GM12878 (cell line): ENCODE measurements at regions of chr1 and their contacts with region 1.

Region 1: DNA sequence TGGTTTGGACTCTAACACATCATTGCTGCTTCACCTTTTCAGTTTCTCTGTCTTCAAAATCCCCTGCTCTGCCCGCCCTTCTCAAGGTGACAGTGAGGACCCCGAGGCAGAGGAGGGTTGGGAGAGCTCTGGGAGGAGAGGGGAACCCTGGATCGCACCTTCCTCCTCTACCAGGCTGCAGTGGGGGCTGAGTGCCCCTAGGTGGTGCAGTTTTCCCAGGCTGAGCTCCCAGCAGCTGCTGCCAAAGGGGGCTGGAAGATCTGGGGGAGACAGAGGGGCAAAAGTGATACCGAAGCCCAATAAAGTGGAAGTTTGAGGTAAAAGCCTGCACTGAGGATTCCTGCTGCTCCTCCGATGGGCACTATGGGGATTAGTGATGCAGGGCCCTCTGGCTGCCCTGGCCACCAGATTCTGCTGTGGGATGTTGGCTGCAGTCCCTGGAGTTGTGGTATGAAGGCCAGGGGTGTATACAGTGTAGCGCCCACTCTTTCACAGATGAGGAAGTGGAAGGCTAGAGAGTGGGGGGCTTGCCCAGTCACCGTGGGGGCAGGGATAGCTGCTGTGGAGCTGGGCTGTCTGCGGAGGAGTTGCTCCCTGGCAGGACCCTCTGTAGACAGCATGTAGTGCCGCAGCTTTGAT is 40.7 kb upstream of the SCMH1 start:
- DNase-seq: no peak
- ATAC-seq: peak; percentile 88
- H3K4me3 ChIP-seq: no peak overlapping the region
- H3K27ac ChIP-seq: no peak overlapping the region
- H3K4me1 ChIP-seq: no peaks in the 10 kb centered on the region
- H3K27me3 ChIP-seq: peaks cover 2 to 4% of the 10 kb centered on the region in 2 experiments; a peak in 1 of 4 replicates
- CTCF ChIP-seq: peak; percentile 79 to 94 (median 88)
- EP300 ChIP-seq: no peak
- POLR2A ChIP-seq: no peak
- RAD21 ChIP-seq: peak; percentile 72

Region 2: DNA sequence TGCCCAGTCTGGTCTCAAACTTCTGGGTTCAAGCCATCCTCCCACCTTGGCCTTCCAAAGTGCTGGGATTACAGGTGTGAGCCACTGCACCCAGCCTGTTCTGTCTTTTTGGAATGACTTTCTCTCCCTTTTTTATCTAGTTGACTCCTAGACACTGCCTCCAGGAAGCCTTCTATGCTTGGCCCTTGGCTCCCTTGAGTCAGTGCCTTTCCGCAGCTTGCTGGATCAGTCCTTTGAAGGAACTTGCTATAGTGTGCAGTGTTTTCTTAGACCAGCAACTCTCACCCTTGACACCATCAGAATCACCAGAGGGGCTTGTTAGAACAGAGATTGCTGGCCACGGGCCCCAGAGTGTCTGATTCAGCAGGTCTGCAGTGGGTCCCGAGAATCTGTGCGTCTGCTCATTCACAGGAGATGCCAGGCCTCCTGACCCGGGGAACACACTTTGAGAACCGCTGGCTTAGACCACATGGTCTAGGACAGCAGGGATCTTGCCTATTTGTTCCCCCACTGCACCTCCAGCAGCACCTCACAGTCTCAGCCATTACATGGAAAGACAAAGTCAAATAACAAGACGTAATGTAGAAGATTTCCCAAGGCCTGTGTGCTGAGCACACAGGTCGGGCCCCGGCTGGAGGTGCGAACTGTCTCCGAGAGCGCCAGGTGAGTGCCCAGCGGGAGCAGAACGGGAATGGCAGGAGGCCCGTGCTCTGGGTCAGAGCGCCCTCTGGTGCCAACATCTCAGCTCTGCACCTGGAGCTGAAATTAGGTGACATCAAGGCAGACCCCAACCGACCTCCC is 330.7 kb before region 1 on chr1:
- CTCF ChIA-PET with region 1: no interaction called
- POLR2A ChIA-PET with region 1: no interaction called
- RAD21 ChIA-PET with region 1: no interaction called
- SMC1A ChIA-PET with region 1: no interaction called
- in situ Hi-C with region 1: no loop called
- intact Hi-C with region 1: no loop called
- DNase-seq: no peak
- ATAC-seq: peak; percentile 88
- H3K4me3 ChIP-seq: no peak overlapping the region
- H3K27ac ChIP-seq: no peak overlapping the region
- H3K4me1 ChIP-seq: no peaks in the 10 kb centered on the region
- H3K27me3 ChIP-seq: no peaks in the 10 kb centered on the region
- CTCF ChIP-seq: peak; percentile 91 to 94 (median 92)
- EP300 ChIP-seq: no peak
- POLR2A ChIP-seq: no peak
- RAD21 ChIP-seq: peak; percentile 87

Region 3: DNA sequence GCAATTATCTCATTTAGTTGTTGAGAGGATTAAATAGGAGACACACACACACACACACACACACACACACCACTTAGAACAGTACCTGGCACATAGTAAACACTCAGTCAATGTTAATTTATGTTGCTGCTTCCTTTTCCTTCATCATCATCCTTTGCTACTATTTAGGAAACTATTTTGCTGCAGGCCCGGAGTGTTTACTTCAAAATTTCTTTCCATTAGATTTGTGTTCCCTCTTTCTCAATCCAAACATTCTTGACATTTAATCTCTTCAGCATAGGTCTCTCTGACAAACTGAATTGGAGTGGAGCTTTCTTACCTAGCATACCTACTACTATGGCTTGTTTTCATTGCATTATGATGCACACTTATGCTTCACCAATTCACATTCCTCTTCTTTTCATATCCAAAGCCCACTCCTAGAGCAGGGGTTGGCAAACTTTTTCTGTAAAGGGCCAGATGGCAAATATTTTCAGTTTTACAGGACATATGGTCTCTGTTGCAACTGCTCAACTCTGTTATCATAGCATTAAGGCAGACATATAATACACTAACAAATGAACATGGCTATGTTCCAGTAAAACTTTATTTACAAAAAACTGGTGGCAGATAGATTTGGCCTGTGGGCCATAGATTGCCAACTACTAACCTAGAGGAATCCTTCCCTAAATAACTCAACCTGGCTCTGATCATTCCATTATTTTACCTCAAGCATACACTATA is 90.2 kb before region 1 on chr1:
- CTCF ChIA-PET with region 1: no interaction called
- POLR2A ChIA-PET with region 1: no interaction called
- RAD21 ChIA-PET with region 1: no interaction called
- SMC1A ChIA-PET with region 1: no interaction called
- in situ Hi-C with region 1: no loop called
- intact Hi-C with region 1: no loop called
- DNase-seq: no peak
- ATAC-seq: no peak
- H3K4me3 ChIP-seq: no peak overlapping the region
- H3K27ac ChIP-seq: no peak overlapping the region
- H3K4me1 ChIP-seq: no peaks in the 10 kb centered on the region
- H3K27me3 ChIP-seq: no peaks in the 10 kb centered on the region
- CTCF ChIP-seq: no peak
- EP300 ChIP-seq: no peak
- POLR2A ChIP-seq: no peak
- RAD21 ChIP-seq: no peak

Region 4: GRCh38 chr1:41222496-41222895 is 60.3 kb before region 1 on chr1:
- CTCF ChIA-PET with region 1: no interaction called
- POLR2A ChIA-PET with region 1: no interaction called
- RAD21 ChIA-PET with region 1: no interaction called
- SMC1A ChIA-PET with region 1: no interaction called
- in situ Hi-C with region 1: no loop called
- intact Hi-C with region 1: no loop called
- DNase-seq: no peak
- ATAC-seq: peak; percentile 96
- H3K4me3 ChIP-seq: 0 out of 2 replicates have a peak overlapping the region, but pooled peaks have one; percentile 27
- H3K27ac ChIP-seq: peak overlapping the region; percentile 27; the same call in 1 of the 2 replicates
- H3K4me1 ChIP-seq: peaks cover 10% of the 10 kb centered on the region; the same call in 1 of the 2 replicates
- H3K27me3 ChIP-seq: no peaks in the 10 kb centered on the region
- CTCF ChIP-seq: no peak
- EP300 ChIP-seq: no peak
- POLR2A ChIP-seq: no peak
- RAD21 ChIP-seq: no peak

Region 5: GRCh38 chr1:41241782-41242341 is 40.9 kb before region 1 on chr1 and contains the start of gene SCMH1:
- CTCF ChIA-PET with region 1: no interaction called
- POLR2A ChIA-PET with region 1: no interaction called
- RAD21 ChIA-PET with region 1: no interaction called
- SMC1A ChIA-PET with region 1: no interaction called
- in situ Hi-C with region 1: no loop called
- intact Hi-C with region 1: no loop called
- DNase-seq: no peak
- ATAC-seq: peak; percentile 62
- H3K4me3 ChIP-seq: peak within 1 kb of the TSS; percentile 74
- H3K27ac ChIP-seq: peak within 1 kb of the TSS; percentile 92
- H3K4me1 ChIP-seq: peaks cover 17% of the 10 kb centered on the region
- H3K27me3 ChIP-seq: no peaks in the 10 kb centered on the region
- CTCF ChIP-seq: no peak
- EP300 ChIP-seq: no peak
- POLR2A ChIP-seq: 0 out of 2 replicates have a peak, but pooled peaks have one; percentile 1
- RAD21 ChIP-seq: no peak
- polyA plus RNA-seq, gene SCMH1: 7.5 to 7.9 TPM

Region 6: DNA sequence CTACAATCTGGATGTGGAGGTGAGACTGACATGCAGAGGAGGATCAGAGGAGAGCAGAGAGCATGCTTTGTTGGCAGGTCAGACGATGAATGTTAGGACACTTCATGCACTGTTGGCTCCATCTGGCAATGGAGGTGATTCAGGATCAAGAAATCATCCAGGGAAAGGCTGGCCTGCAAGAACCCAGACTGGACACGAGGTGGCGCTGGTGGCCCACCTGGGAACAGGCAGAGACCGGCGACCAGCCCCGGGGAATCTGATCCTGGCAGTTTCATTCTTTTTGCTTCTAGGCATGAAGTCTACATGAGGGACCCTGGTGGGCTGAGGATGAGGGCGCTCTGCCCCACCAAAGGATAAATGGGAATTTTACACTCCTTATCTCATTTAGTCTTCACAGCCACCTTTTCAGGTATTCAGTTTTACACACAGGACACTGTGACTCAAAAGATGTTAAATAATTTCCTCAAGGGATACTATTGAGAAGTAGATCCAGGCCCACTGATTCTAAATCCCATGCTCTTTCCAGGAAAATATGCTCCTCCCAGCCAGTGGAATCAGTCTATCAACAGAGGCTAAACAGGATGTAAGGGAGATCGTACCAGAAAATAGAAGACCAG is 14.5 kb before region 1 on chr1:
- CTCF ChIA-PET with region 1: interaction called, 13 read pairs
- POLR2A ChIA-PET with region 1: no interaction called
- RAD21 ChIA-PET with region 1: interaction called, 6 read pairs
- SMC1A ChIA-PET with region 1: interaction called, 3 read pairs
- in situ Hi-C with region 1: no loop called
- intact Hi-C with region 1: no loop called
- DNase-seq: no peak
- ATAC-seq: peak; percentile 80
- H3K4me3 ChIP-seq: no peak overlapping the region
- H3K27ac ChIP-seq: no peak overlapping the region
- H3K4me1 ChIP-seq: no peaks in the 10 kb centered on the region
- H3K27me3 ChIP-seq: no peaks in the 10 kb centered on the region
- CTCF ChIP-seq: peak; percentile 94 to 96 (median 96); a peak in 5 of 6 replicates
- EP300 ChIP-seq: no peak
- POLR2A ChIP-seq: no peak
- RAD21 ChIP-seq: peak; percentile 91

Region 7: DNA sequence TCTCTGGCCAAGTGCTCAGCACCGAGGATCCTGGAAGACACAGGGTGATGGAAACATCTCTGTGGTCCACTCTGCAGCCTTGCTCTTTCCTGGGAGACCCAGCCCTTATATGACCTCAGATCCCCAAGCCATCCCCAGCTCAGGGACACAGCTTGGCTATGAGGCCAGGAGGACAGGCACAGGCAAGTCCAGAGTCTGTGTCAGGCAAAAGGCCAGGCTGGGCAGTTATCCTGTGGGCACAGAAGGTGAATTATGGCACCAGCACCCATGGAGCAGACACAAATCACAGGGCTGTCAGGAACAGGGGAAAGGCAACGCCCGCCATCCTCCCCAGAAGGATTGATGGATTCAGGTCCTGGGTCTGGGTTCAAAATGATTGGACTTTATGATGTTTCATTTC is 11.4 kb after region 1 on chr1:
- CTCF ChIA-PET with region 1: interaction called, 32 read pairs
- POLR2A ChIA-PET with region 1: no interaction called
- RAD21 ChIA-PET with region 1: no interaction called
- SMC1A ChIA-PET with region 1: interaction called, 4 read pairs
- in situ Hi-C with region 1: no loop called
- intact Hi-C with region 1: no loop called
- DNase-seq: no peak
- ATAC-seq: no peak
- H3K4me3 ChIP-seq: no peak overlapping the region
- H3K27ac ChIP-seq: no peak overlapping the region
- H3K4me1 ChIP-seq: no peaks in the 10 kb centered on the region
- H3K27me3 ChIP-seq: peaks cover 1 to 3% of the 10 kb centered on the region in 2 experiments; a peak in 2 of 4 replicates
- CTCF ChIP-seq: no peak
- EP300 ChIP-seq: no peak
- POLR2A ChIP-seq: no peak
- RAD21 ChIP-seq: no peak

Region 8: DNA sequence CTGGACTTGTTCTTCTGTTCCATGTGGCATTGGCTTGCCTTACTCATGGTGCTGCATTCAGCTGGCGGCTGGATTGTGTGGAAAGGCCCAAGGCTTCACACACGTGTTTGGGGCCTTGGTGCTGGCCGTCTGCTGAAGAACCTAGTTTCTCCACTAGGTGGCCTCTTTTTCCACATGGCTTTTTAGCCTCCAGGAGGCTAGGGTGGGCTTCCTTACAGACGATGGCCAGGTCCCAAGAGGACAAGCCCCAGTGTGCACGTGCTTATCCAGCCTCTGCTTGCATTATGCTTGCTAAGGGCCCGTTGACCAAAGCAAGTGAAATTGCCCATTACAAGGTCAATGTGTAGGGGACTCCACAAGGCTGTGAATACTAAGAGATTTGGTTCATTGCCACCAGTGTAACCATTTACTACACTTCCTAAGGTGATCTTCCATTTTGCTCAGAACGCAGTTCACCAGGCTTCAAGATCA is 30.9 kb after region 1 on chr1:
- CTCF ChIA-PET with region 1: interaction called, 19 read pairs
- POLR2A ChIA-PET with region 1: no interaction called
- RAD21 ChIA-PET with region 1: no interaction called
- SMC1A ChIA-PET with region 1: interaction called, 5 read pairs
- in situ Hi-C with region 1: no loop called
- intact Hi-C with region 1: no loop called
- DNase-seq: no peak
- ATAC-seq: peak; percentile 78
- H3K4me3 ChIP-seq: no peak overlapping the region
- H3K27ac ChIP-seq: no peak overlapping the region
- H3K4me1 ChIP-seq: no peaks in the 10 kb centered on the region
- H3K27me3 ChIP-seq: no peaks in the 10 kb centered on the region; a peak in 2 of 4 replicates
- CTCF ChIP-seq: peak; percentile 46 to 71 (median 62)
- EP300 ChIP-seq: no peak
- POLR2A ChIP-seq: no peak
- RAD21 ChIP-seq: peak; percentile 36; the same call in 1 of the 2 replicates

Region 9: GRCh38 chr1:41322835-41323627 is 40.2 kb after region 1 on chr1:
- CTCF ChIA-PET with region 1: interaction called, 6 read pairs
- POLR2A ChIA-PET with region 1: no interaction called
- RAD21 ChIA-PET with region 1: interaction called, 13 read pairs
- SMC1A ChIA-PET with region 1: interaction called, 4 read pairs
- in situ Hi-C with region 1: no loop called
- intact Hi-C with region 1: no loop called
- DNase-seq: no peak
- ATAC-seq: peak; percentile 99
- H3K4me3 ChIP-seq: no peak overlapping the region
- H3K27ac ChIP-seq: no peak overlapping the region
- H3K4me1 ChIP-seq: peaks cover 4% of the 10 kb centered on the region
- H3K27me3 ChIP-seq: no peaks in the 10 kb centered on the region
- CTCF ChIP-seq: peak; percentile 71 to 92 (median 78)
- EP300 ChIP-seq: no peak
- POLR2A ChIP-seq: no peak
- RAD21 ChIP-seq: peak; percentile 74